ENCODE measurements at regions of chr1 and their contacts with region 1.

Region 1: GRCh38 chr1:175319418-175320230 is 127.0 kb upstream of the KIAA0040 start:
- DNase-seq: peak; percentile 19
- H3K4me3 ChIP-seq: no peak overlapping the region
- CTCF ChIP-seq: peak; percentile 77

Region 2: DNA sequence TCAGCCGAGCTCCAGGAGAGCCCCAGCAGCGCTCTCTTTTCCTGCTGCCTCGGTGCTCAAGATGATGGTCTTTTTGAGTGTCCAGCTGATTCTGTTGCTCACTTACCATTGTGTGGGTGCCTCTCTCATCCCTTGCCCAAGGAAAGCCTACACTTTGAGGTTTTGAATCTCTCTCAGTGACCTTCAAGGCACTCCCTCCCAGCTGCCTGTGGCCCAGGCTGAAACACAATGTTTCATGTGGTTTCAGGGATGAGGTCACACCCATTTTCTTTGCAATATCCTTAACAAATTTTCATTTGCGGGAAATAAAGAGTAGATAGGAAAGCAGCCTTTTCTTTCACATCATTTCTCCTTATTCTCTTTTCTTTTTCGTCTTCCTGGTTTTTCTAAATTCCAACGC is 283.8 kb before region 1 on chr1:
- CTCF ChIA-PET with region 1: interaction called, 32 read pairs
- POLR2A ChIA-PET with region 1: no interaction called
- DNase-seq: no peak
- H3K4me3 ChIP-seq: no peak overlapping the region
- CTCF ChIP-seq: no peak

Region 3: GRCh38 chr1:175154629-175155472 is 164.8 kb before region 1 on chr1:
- CTCF ChIA-PET with region 1: interaction called, 84 read pairs
- POLR2A ChIA-PET with region 1: no interaction called
- DNase-seq: no peak
- H3K4me3 ChIP-seq: no peak overlapping the region
- CTCF ChIP-seq: peak; percentile 73

Region 4: GRCh38 chr1:175174309-175175165 is 145.1 kb before region 1 on chr1:
- CTCF ChIA-PET with region 1: no interaction called
- POLR2A ChIA-PET with region 1: no interaction called
- DNase-seq: no peak
- H3K4me3 ChIP-seq: no peak overlapping the region
- CTCF ChIP-seq: no peak

Measured in AG04449 (cell line).